ENCODE measurements at regions of chr20 and their contacts with region 1.

Region 1: GRCh38 chr20:33515569-33516216 is 25.8 kb downstream of the CBFA2T2 start:
- DNase-seq: peak; percentile 27
- ATAC-seq: no peak
- H3K4me3 ChIP-seq: no peak overlapping the region
- H3K27ac ChIP-seq: no peak overlapping the region
- H3K4me1 ChIP-seq: peaks cover 51% of the 10 kb centered on the region
- H3K27me3 ChIP-seq: no peaks in the 10 kb centered on the region
- CTCF ChIP-seq: peak; percentile 56
- EP300 ChIP-seq: no peak
- POLR2A ChIP-seq: no peak
- RAD21 ChIP-seq: no peak

Region 2: GRCh38 chr20:33465481-33466302 is 50.0 kb before region 1 on chr20:
- CTCF ChIA-PET with region 1: no interaction called
- POLR2A ChIA-PET with region 1: no interaction called
- in situ Hi-C with region 1: no loop called
- intact Hi-C with region 1: loop called (anchors 2 kb)
- DNase-seq: peak; percentile 78
- ATAC-seq: peak; percentile 92
- H3K4me3 ChIP-seq: no peak overlapping the region; a peak in 1 of 6 replicates
- H3K27ac ChIP-seq: no peak overlapping the region
- H3K4me1 ChIP-seq: peaks cover 43% of the 10 kb centered on the region
- H3K27me3 ChIP-seq: peaks cover 0 to 4% of the 10 kb centered on the region in 2 experiments; a peak in 1 of 5 replicates
- CTCF ChIP-seq: no peak
- EP300 ChIP-seq: no peak
- POLR2A ChIP-seq: no peak
- RAD21 ChIP-seq: no peak

Region 3: DNA sequence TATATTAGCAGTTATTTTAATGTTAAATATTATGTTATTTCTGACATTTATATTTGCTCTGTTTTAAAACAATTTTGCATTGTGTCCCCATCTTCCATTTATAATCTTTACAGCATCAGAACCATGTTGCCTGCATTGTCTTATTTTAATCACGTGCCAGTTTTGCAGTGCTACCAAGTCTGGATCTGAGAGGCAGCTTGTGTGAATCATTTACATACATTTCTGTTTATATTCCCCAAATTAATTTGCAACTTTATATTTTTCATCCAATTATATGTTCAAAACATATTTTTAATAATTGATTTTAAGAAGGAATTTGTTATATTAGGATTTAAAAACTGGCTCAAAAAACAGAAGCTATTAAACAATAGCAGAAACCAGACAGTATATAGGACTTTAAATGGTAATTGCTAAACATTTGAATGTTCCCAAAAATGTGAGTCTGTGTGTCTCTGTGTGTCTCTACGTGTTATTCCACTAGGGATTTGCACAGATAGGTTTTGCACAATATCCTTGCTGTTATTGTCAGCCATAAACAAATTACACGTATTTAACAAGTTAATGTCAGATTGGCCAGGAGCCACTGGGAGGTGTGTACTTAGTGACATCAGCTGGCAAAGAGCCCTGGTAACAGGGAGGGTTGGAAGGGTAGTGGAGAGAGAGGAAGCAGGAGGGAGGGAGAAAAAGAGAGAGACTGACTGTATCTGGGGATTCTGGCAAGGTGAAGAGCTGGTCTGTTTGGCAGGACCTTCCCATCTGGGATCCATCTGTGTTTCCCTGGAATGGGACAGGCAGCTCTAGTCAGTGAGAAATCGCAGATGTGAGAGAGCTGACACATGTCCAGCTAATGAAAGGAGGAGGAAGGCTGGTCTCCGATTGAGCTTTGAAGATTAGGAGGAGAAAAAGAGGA is 46.3 kb after region 1 on chr20:
- CTCF ChIA-PET with region 1: no interaction called
- POLR2A ChIA-PET with region 1: interaction called, 3 read pairs
- in situ Hi-C with region 1: no loop called
- intact Hi-C with region 1: loop called (anchors 10 kb)
- DNase-seq: peak; percentile 93
- ATAC-seq: peak; percentile 91
- H3K4me3 ChIP-seq: no peak overlapping the region
- H3K27ac ChIP-seq: peak overlapping the region; percentile 15
- H3K4me1 ChIP-seq: peaks cover 57% of the 10 kb centered on the region
- H3K27me3 ChIP-seq: no peaks in the 10 kb centered on the region
- CTCF ChIP-seq: peak; percentile 50
- EP300 ChIP-seq: peak in 1 of 2 experiments; percentile 63; a peak in 2 of 4 replicates
- POLR2A ChIP-seq: no peak
- RAD21 ChIP-seq: peak; percentile 44; the same call in 1 of the 2 replicates

Region 4: DNA sequence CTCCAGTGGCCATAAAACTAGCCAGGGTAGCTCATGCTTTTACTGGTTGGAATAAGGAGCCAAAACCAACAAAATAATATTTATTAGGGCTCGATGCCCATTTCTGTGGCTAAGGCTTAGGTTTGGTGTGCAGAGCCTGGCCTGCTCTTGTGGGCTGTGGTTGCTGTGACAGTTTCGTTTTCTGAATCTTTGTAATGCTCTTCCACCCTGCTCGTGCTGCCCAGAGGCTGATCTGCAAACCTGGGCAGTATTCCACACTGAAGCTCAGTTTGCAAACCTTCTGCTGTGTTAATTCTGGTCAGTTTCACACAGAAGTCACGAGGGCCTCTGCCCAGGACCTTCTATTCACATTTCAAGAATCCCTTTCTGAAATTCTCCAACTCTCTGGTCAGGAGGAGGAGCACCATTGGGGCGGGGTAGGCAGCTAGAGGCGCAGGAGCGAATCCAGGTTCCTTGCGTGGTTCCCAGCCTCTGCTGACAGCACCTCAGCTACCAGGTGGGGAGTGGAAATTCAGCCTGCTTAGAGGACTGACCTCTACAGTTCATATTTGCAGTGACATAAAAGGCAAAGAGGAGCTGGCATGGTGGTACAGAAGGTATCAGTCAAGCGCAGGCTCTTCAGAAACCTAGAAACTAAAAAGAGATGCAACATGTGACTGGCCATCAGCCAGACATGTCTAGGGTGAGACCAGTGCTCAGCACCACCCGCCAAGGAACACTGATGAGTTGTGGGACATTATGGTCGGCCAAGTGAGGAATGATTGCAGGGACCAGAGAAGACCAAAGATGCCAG is 132.1 kb after region 1 on chr20:
- CTCF ChIA-PET with region 1: interaction called, 4 read pairs
- POLR2A ChIA-PET with region 1: no interaction called
- in situ Hi-C with region 1: loop called (anchors 10 kb)
- intact Hi-C with region 1: loop called (anchors 5 kb)
- DNase-seq: no peak
- ATAC-seq: peak; percentile 5
- H3K4me3 ChIP-seq: no peak overlapping the region
- H3K27ac ChIP-seq: no peak overlapping the region
- H3K4me1 ChIP-seq: peaks cover 15% of the 10 kb centered on the region
- H3K27me3 ChIP-seq: no peaks in the 10 kb centered on the region
- CTCF ChIP-seq: 0 out of 2 replicates have a peak, but pooled peaks have one; percentile 22
- EP300 ChIP-seq: no peak
- POLR2A ChIP-seq: peak; percentile 9 to 36; a peak in 2 of 4 replicates
- RAD21 ChIP-seq: no peak

Region 5: DNA sequence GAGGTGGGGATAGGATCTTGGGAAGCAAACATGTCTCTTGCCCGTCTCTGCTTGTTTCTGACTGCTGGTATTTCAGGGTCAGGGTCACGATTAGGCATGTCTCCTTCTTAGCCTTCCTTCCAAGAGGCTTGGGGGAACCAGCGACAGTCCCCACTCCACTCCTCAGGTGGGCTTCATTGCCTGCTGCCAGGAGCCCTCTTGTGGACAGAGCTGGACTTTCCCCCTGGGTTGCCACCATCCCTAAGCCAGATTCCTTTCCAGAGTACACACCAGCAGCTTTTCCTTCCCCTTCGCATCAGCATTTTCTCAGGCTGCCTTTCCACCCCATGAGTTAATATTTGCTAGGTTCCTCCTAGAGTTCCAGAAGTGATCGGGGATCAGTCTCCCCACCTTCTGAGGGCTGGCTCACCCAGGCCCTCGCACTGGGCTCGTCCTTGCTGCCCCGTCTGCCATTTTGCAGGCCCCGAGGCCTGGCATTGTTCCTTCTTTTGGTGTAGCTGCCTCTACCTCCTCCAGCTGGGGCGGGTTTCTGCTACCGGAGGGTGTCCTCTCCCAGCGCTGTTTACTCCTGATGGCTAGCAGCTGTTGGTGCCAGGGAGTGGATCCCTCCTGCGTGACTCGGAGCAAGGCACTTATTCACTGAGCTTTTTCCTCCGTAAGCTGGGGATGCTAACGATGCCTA is 137.7 kb after region 1 on chr20:
- CTCF ChIA-PET with region 1: interaction called, 4 read pairs
- POLR2A ChIA-PET with region 1: no interaction called
- in situ Hi-C with region 1: loop called (anchors 10 kb)
- intact Hi-C with region 1: loop called (anchors 5 kb)
- DNase-seq: peak; percentile 75
- ATAC-seq: peak; percentile 73
- H3K4me3 ChIP-seq: no peak overlapping the region
- H3K27ac ChIP-seq: no peak overlapping the region
- H3K4me1 ChIP-seq: peaks cover 37% of the 10 kb centered on the region
- H3K27me3 ChIP-seq: no peaks in the 10 kb centered on the region
- CTCF ChIP-seq: peak; percentile 99
- EP300 ChIP-seq: no peak
- POLR2A ChIP-seq: peak in 1 of 2 experiments; percentile 66; a peak in 2 of 4 replicates
- RAD21 ChIP-seq: peak; percentile 96